Natural killer cell (primary cell): ENCODE measurements at regions of chr5 and their contacts with region 1.

Region 1: GRCh38 chr5:18305297-18305924 is 671.2 kb downstream of the TAF11L14 start:
- DNase-seq: no peak
- ATAC-seq: no peak
- H3K4me3 ChIP-seq: no peak overlapping the region
- H3K4me3 Mint-ChIP-seq: no peak overlapping the region
- H3K27ac ChIP-seq: no peak overlapping the region
- H3K27ac Mint-ChIP-seq: no peak overlapping the region
- H3K4me1 ChIP-seq: no peaks in the 10 kb centered on the region
- H3K4me1 Mint-ChIP-seq: no peaks in the 10 kb centered on the region
- H3K27me3 ChIP-seq: no peaks in the 10 kb centered on the region
- H3K27me3 Mint-ChIP-seq: no peaks in the 10 kb centered on the region
- CTCF ChIP-seq: no peak

Region 2: DNA sequence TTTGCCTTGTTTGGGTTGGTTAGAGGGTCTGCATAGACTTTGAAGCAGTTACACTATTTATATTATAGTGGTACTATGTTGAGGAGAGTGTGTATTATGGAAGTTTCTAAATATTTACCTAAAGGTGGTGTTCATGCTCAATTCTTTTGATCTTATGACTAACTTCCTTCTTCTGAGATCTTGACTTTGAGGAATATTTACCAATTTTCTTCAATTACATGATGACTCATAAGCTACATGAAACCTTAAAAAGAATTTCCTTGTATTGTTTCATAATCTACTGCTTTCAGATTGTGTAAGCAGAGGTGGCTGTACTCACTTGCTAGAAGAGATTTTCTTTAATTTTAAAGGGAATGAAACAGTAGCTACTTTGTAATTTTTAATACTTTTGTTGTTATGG is 395.1 kb before region 1 on chr5:
- intact Hi-C with region 1: no loop called
- DNase-seq: no peak
- ATAC-seq: no peak
- H3K4me3 ChIP-seq: no peak overlapping the region
- H3K4me3 Mint-ChIP-seq: no peak overlapping the region
- H3K27ac ChIP-seq: no peak overlapping the region
- H3K27ac Mint-ChIP-seq: no peak overlapping the region
- H3K4me1 ChIP-seq: no peaks in the 10 kb centered on the region
- H3K4me1 Mint-ChIP-seq: no peaks in the 10 kb centered on the region
- H3K27me3 ChIP-seq: no peaks in the 10 kb centered on the region
- H3K27me3 Mint-ChIP-seq: no peaks in the 10 kb centered on the region
- CTCF ChIP-seq: no peak

Region 3: GRCh38 chr5:18236386-18236785 is 69.0 kb before region 1 on chr5:
- intact Hi-C with region 1: loop called (anchors 2 kb)
- DNase-seq: no peak
- ATAC-seq: no peak
- H3K4me3 ChIP-seq: no peak overlapping the region
- H3K4me3 Mint-ChIP-seq: no peak overlapping the region
- H3K27ac ChIP-seq: no peak overlapping the region
- H3K27ac Mint-ChIP-seq: no peak overlapping the region
- H3K4me1 ChIP-seq: no peaks in the 10 kb centered on the region
- H3K4me1 Mint-ChIP-seq: no peaks in the 10 kb centered on the region
- H3K27me3 ChIP-seq: no peaks in the 10 kb centered on the region
- H3K27me3 Mint-ChIP-seq: no peaks in the 10 kb centered on the region
- CTCF ChIP-seq: no peak

Region 4: DNA sequence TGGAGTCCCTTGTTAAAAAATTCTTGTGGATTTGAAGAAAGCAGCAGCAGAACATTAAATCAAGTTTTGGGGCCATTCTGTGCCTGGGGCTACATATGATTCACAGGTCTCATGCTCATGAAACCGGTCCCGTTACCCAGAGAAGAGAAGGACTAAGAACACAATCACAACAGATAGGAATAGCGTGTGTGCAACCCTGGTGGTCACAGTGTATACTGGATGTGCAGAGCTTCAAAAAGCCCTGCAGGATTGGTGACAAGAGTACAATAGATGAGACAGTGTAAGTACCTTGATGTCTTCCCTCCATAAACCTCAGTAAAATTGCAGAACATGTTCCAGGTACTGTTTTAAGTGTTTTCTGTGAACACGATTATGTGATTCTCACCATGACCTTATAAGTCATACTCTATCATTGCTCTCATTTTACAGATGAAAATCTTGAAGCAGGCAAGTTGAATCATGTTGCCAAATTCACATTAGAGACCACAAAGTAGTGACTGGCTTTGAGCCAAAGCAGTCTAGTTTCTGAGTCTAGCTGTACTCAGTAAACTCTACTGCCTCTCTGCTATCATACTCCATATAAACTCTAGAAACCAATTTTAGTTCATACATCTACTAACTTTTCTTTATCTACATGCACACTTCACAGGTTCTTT is 34.6 kb before region 1 on chr5:
- intact Hi-C with region 1: no loop called
- DNase-seq: no peak
- ATAC-seq: no peak
- H3K4me3 ChIP-seq: no peak overlapping the region
- H3K4me3 Mint-ChIP-seq: no peak overlapping the region
- H3K27ac ChIP-seq: no peak overlapping the region
- H3K27ac Mint-ChIP-seq: no peak overlapping the region
- H3K4me1 ChIP-seq: no peaks in the 10 kb centered on the region
- H3K4me1 Mint-ChIP-seq: no peaks in the 10 kb centered on the region
- H3K27me3 ChIP-seq: no peaks in the 10 kb centered on the region
- H3K27me3 Mint-ChIP-seq: no peaks in the 10 kb centered on the region
- CTCF ChIP-seq: no peak